ENCODE measurements at regions of chr3 and their contacts with region 1.

Region 1: GRCh38 chr3:122858373-122858772 is 63.5 kb downstream of the SLC49A4 start:
- DNase-seq: no peak
- H3K4me3 ChIP-seq: no peak overlapping the region
- H3K4me3 Mint-ChIP-seq: no peak overlapping the region
- H3K27ac ChIP-seq: no peak overlapping the region
- H3K27ac Mint-ChIP-seq: no peak overlapping the region
- H3K4me1 ChIP-seq: no peaks in the 10 kb centered on the region
- H3K4me1 Mint-ChIP-seq: no peaks in the 10 kb centered on the region
- H3K27me3 ChIP-seq: no peaks in the 10 kb centered on the region
- H3K27me3 Mint-ChIP-seq: no peaks in the 10 kb centered on the region
- CTCF ChIP-seq: no peak

Region 2: GRCh38 chr3:122754929-122755328 is 103.4 kb before region 1 on chr3:
- intact Hi-C with region 1: loop called in 1 of 2 experiments (anchors 10 kb)
- DNase-seq: peak; percentile 64 to 73 (median 65)
- H3K4me3 ChIP-seq: no peak overlapping the region
- H3K4me3 Mint-ChIP-seq: no peak overlapping the region
- H3K27ac ChIP-seq: peak overlapping the region in 1 of 2 donors; percentile 5
- H3K27ac Mint-ChIP-seq: peak overlapping the region in 1 of 7 donors; percentile 66
- H3K4me1 ChIP-seq: peaks cover 28 to 30% of the 10 kb centered on the region in 2 donors
- H3K4me1 Mint-ChIP-seq: peaks cover 39% of the 10 kb centered on the region
- H3K27me3 ChIP-seq: no peaks in the 10 kb centered on the region
- H3K27me3 Mint-ChIP-seq: no peaks in the 10 kb centered on the region
- CTCF ChIP-seq: peak; percentile 90

Region 3: DNA sequence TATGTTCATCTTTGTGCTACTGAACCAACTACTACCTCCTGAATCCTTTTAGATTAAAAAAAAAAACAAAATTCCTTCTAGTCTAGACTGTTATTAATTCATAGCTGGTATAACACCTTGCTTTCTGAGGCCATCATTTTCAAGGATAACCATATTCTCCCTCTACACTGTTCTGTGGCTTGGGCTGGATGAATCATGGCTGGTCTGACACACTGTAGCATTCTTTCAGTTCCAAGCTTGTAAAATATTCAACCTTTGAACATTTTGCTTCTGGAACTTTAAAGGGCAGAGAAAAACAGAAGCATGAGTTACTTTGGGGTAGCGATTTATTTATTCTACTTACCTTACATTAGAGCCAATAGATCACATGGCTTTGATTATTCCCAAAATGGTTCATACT is 72.3 kb before region 1 on chr3:
- intact Hi-C with region 1: no loop called
- DNase-seq: no peak
- H3K4me3 ChIP-seq: no peak overlapping the region
- H3K4me3 Mint-ChIP-seq: no peak overlapping the region
- H3K27ac ChIP-seq: no peak overlapping the region
- H3K27ac Mint-ChIP-seq: peak overlapping the region in 1 of 7 donors; percentile 23
- H3K4me1 ChIP-seq: peaks cover 23 to 34% of the 10 kb centered on the region in 2 donors
- H3K4me1 Mint-ChIP-seq: peaks cover 18% of the 10 kb centered on the region
- H3K27me3 ChIP-seq: no peaks in the 10 kb centered on the region
- H3K27me3 Mint-ChIP-seq: no peaks in the 10 kb centered on the region
- CTCF ChIP-seq: no peak